ENCODE measurements at regions of chr3 and their contacts with region 1.

Region 1: GRCh38 chr3:112327371-112327951 is 5.5 kb upstream of the CD200 start:
- DNase-seq: peak; percentile 56 to 66 (median 60)
- H3K4me3 ChIP-seq: no peak overlapping the region
- H3K4me3 Mint-ChIP-seq: no peak overlapping the region
- H3K27ac ChIP-seq: no peak overlapping the region
- H3K27ac Mint-ChIP-seq: no peak overlapping the region
- H3K4me1 ChIP-seq: no peaks in the 10 kb centered on the region
- H3K4me1 Mint-ChIP-seq: peaks cover 0 to 7% (median under 1%) of the 10 kb centered on the region in 4 donors
- H3K27me3 ChIP-seq: no peaks in the 10 kb centered on the region
- H3K27me3 Mint-ChIP-seq: peaks cover 4 to 6% of the 10 kb centered on the region in 2 donors

Region 2: DNA sequence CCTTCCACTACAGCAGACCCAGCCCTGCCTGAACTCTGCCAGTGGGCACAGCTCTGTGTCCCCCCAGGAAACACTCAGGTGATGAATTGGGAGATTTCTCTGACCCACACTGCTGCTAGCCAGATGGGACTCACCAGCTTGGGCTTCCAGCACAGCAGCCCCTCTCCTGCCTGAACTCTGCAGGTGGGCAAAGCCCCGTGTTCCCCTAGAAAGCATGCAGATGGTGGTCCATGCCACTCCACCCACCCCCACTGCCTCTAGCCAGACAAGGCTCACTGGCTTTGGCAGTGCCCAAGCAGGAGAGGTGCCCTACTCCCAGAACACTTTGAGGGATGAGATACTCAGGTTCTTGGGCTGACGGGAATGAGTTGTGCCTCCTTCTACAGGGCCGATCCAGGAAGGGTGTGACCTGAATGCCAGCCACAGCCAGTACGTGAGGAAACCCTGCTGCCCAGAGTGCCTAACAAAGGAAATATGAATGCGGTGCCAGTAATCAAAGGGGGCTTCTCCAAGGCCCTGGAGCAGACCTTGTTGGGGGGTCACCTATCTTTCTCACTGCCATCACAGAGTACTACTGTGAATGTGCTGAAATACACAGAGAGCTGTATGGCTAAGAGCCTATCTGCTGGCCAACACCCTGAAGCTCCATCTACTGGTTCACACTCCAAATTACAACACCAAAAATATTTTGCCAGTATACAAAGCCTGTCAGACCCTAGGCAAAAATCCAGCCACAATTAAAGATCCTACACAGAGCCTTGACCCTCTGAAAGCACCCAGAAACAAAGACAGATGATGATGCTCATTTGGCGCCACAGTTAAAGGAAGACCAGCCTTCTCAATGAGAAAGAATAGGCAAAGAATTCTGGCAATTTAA is 109.9 kb after region 1 on chr3:
- CTCF ChIA-PET with region 1: interaction called, 4 read pairs
- POLR2A ChIA-PET with region 1: no interaction called
- intact Hi-C with region 1: loop called (anchors 1 kb)
- DNase-seq: peak in 4 of 5 donors; percentile 24 to 39 (median 32)
- H3K4me3 ChIP-seq: no peak overlapping the region
- H3K4me3 Mint-ChIP-seq: peak overlapping the region in 7 of 8 donors; percentile 39 to 84 (median 63)
- H3K27ac ChIP-seq: no peak overlapping the region
- H3K27ac Mint-ChIP-seq: peak overlapping the region in 5 of 7 donors; percentile 16 to 45 (median 42)
- H3K4me1 ChIP-seq: peaks cover 9% of the 10 kb centered on the region
- H3K4me1 Mint-ChIP-seq: peaks cover 9 to 24% (median 19%) of the 10 kb centered on the region in 4 donors
- H3K27me3 ChIP-seq: no peaks in the 10 kb centered on the region
- H3K27me3 Mint-ChIP-seq: no peaks in the 10 kb centered on the region

Region 3: GRCh38 chr3:112531358-112531781 is 203.9 kb after region 1 on chr3:
- CTCF ChIA-PET with region 1: interaction called, 13 read pairs
- POLR2A ChIA-PET with region 1: no interaction called
- intact Hi-C with region 1: loop called (anchors 1 kb)
- DNase-seq: peak in 4 of 5 donors; percentile 22 to 37 (median 30)
- H3K4me3 ChIP-seq: no peak overlapping the region
- H3K4me3 Mint-ChIP-seq: no peak overlapping the region
- H3K27ac ChIP-seq: no peak overlapping the region
- H3K27ac Mint-ChIP-seq: peak overlapping the region in 2 of 7 donors; percentile 5 to 12
- H3K4me1 ChIP-seq: no peaks in the 10 kb centered on the region
- H3K4me1 Mint-ChIP-seq: peaks cover 0 to 4% (median 2%) of the 10 kb centered on the region in 4 donors
- H3K27me3 ChIP-seq: no peaks in the 10 kb centered on the region
- H3K27me3 Mint-ChIP-seq: no peaks in the 10 kb centered on the region

Measured in CD4-positive, alpha-beta memory T cell (primary cell).